B cell (primary cell): ENCODE measurements at regions of chr17 and their contacts with region 1.

Region 1: GRCh38 chr17:4966844-4967538 is 626 bp downstream of the SPAG7 start:
- DNase-seq: peak; percentile 99
- ATAC-seq: peak; percentile 85
- H3K4me3 ChIP-seq: peak overlapping the region; percentile 68 to 92 (median 84)
- H3K4me3 Mint-ChIP-seq: no peak overlapping the region
- H3K27ac ChIP-seq: peak overlapping the region; percentile 67 to 68
- H3K27ac Mint-ChIP-seq: no peak overlapping the region
- H3K4me1 ChIP-seq: peaks cover 17 to 22% of the 10 kb centered on the region in 2 donors
- H3K4me1 Mint-ChIP-seq: peaks cover 15% of the 10 kb centered on the region
- H3K27me3 ChIP-seq: no peaks in the 10 kb centered on the region
- H3K27me3 Mint-ChIP-seq: no peaks in the 10 kb centered on the region
- CTCF ChIP-seq: no peak

Region 2: DNA sequence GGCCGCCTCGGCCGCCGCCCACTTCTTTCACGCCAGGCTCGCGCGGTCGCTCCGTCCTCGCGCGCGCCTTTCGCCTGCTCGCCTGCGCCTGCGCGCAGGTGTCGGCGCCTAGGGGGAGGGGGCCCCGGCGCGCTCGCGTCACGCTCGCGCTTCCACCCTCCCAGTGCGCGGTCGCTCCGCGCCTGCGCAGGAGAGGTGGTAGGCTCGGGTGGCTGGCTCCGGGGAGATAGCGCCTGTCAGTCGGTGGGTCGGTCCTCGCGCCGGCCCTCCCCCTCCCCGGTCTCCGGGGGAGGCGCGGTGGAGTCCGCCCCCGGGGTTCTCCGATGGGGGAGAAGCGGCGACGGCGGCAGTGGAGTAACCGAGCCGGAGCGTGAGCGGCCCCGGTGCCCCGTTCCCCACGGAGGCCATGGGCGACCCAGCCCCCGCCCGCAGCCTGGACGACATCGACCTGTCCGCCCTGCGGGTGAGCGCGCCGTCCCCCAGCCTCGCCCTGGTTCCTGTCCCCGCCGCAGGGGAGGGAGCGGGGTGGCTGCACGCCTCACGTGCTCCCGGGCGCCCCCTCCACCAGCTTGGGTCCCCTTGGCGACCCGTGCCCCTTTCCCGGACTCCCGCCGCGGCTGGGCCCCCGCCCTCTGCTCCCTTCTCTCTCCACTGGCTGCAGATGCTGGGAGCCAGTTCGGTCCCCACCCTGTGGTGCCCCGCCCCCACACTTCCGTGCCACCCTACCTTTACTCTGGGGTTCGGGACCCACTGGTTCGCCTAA is 133.6 kb before region 1 on chr17 and contains the start of gene MINK1:
- CTCF ChIA-PET with region 1: no interaction called
- POLR2A ChIA-PET with region 1: no interaction called
- intact Hi-C with region 1: loop called (anchors 1 kb)
- DNase-seq: peak; percentile 97
- ATAC-seq: peak; percentile 93
- H3K4me3 ChIP-seq: peak within 1 kb of the TSS; percentile 68 to 86 (median 79)
- H3K4me3 Mint-ChIP-seq: peak within 1 kb of the TSS; percentile 99
- H3K27ac ChIP-seq: peak within 1 kb of the TSS; percentile 77 to 85
- H3K27ac Mint-ChIP-seq: peak within 1 kb of the TSS; percentile 99
- H3K4me1 ChIP-seq: peaks cover 21 to 26% of the 10 kb centered on the region in 2 donors
- H3K4me1 Mint-ChIP-seq: peaks cover 29% of the 10 kb centered on the region
- H3K27me3 ChIP-seq: no peaks in the 10 kb centered on the region
- H3K27me3 Mint-ChIP-seq: no peaks in the 10 kb centered on the region
- CTCF ChIP-seq: no peak
- total RNA-seq, gene MINK1: 108 and 109 TPM in 2 replicates

Region 3: DNA sequence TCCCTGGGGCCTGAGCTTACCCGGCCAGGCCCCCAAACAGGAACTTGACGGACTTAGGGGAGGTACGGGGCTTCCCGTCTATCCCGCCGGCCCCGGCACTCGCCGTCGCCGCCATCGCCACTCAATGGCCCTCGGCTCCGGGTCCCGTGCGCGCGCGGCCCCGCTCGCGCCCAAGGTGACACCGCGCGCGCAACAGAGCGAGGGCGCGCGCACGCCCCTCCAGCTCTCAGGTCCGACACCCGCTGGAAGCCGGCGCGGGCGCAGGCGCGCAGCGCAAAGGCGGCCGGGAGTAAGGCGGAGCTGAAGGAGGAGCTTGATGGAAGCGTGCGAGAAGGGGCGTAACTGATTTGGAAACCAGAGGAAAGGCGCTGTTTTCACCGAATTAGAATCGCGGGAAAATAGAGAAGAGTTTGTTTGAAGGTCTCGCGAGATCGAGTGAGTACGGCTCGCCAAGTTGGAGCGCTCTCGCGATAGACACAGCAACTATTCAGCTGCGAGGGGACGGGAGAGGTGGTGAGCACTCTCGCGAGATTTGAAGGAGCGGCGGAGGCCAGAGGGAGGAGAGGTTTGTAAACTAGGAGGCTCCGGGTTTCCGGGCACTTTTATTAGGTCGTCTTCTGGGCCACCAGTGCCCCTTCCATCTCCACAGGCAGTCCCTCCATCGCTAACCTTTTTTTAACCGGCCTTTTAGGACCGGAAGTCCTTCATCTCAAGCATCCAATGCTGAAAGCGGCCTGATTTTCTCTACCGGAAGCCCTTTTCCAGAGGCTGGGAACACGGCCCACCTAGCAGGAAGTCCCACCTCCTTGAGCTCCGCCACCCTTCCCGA is 27.0 kb before region 1 on chr17 and contains the starts of genes RNF167 and SLC25A11:
- CTCF ChIA-PET with region 1: interaction called, 24 read pairs
- POLR2A ChIA-PET with region 1: interaction called, 25 read pairs
- intact Hi-C with region 1: loop called (anchors 1 kb)
- DNase-seq: peak; percentile 99
- ATAC-seq: peak; percentile 84
- H3K4me3 ChIP-seq: peak within 1 kb of the TSS; percentile 83 to 100 (median 86)
- H3K4me3 Mint-ChIP-seq: peak within 1 kb of the TSS; percentile 89
- H3K27ac ChIP-seq: peak within 1 kb of the TSS; percentile 84 to 87
- H3K27ac Mint-ChIP-seq: peak within 1 kb of the TSS; percentile 95
- H3K4me1 ChIP-seq: peaks cover 50 to 59% of the 10 kb centered on the region in 2 donors
- H3K4me1 Mint-ChIP-seq: peaks cover 58% of the 10 kb centered on the region
- H3K27me3 ChIP-seq: no peaks in the 10 kb centered on the region
- H3K27me3 Mint-ChIP-seq: no peaks in the 10 kb centered on the region
- CTCF ChIP-seq: no peak
- total RNA-seq, gene RNF167: 131 and 143 TPM in 2 replicates
- total RNA-seq, gene SLC25A11: 32.3 and 42.7 TPM in 2 replicates

Region 4: GRCh38 chr17:4986951-4987766 is 20.2 kb after region 1 on chr17 and contains the start of gene CAMTA2:
- CTCF ChIA-PET with region 1: interaction called, 9 read pairs
- POLR2A ChIA-PET with region 1: interaction called, 6 read pairs
- intact Hi-C with region 1: loop called (anchors 1 kb)
- DNase-seq: peak; percentile 91
- ATAC-seq: peak; percentile 89
- H3K4me3 ChIP-seq: peak within 1 kb of the TSS; percentile 67 to 96 (median 81)
- H3K4me3 Mint-ChIP-seq: peak within 1 kb of the TSS; percentile 91
- H3K27ac ChIP-seq: peak within 1 kb of the TSS; percentile 84 to 90
- H3K27ac Mint-ChIP-seq: peak within 1 kb of the TSS; percentile 90
- H3K4me1 ChIP-seq: peaks cover 21 to 28% of the 10 kb centered on the region in 2 donors
- H3K4me1 Mint-ChIP-seq: peaks cover 35% of the 10 kb centered on the region
- H3K27me3 ChIP-seq: no peaks in the 10 kb centered on the region
- H3K27me3 Mint-ChIP-seq: no peaks in the 10 kb centered on the region
- CTCF ChIP-seq: peak; percentile 88
- total RNA-seq, gene CAMTA2: 57.6 and 57.9 TPM in 2 replicates

Region 5: DNA sequence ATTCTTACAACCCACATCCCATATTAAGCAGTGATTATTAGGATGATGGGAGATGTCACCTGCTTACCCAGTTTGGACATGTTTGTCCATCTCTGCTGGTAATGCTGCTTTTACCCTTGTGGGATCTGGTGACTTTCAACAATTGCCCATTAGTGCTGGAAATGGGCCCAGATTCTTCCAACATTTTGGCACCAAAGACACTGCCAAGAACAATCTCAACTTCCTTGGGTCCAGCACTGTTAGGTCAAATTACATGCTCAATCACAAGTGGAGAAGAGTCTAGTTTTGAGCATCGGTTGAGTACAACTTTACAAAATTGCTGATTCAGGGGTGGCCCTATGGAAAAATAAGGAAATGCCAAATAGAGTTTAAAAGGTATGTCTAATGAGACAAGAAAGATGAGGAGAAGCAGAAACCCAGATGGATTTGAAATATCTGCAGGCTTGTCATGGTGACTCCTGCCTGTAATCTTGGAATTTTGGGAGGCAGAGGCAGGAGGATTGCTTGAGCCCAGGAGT is 98.3 kb after region 1 on chr17:
- CTCF ChIA-PET with region 1: interaction called, 17 read pairs
- POLR2A ChIA-PET with region 1: no interaction called
- intact Hi-C with region 1: no loop called
- DNase-seq: no peak
- ATAC-seq: no peak
- H3K4me3 ChIP-seq: no peak overlapping the region
- H3K4me3 Mint-ChIP-seq: no peak overlapping the region
- H3K27ac ChIP-seq: no peak overlapping the region
- H3K27ac Mint-ChIP-seq: peak overlapping the region; percentile 37
- H3K4me1 ChIP-seq: peaks cover 0 to 3% of the 10 kb centered on the region in 2 donors
- H3K4me1 Mint-ChIP-seq: peaks cover 4% of the 10 kb centered on the region
- H3K27me3 ChIP-seq: peaks cover 0 to 6% (median 0%) of the 10 kb centered on the region in 4 experiments
- H3K27me3 Mint-ChIP-seq: peaks cover 9% of the 10 kb centered on the region
- CTCF ChIP-seq: no peak